Head of caudate nucleus (tissue), 42 donors: ENCODE measurements at regions of chr5 and their contacts with region 1.

Region 1: DNA sequence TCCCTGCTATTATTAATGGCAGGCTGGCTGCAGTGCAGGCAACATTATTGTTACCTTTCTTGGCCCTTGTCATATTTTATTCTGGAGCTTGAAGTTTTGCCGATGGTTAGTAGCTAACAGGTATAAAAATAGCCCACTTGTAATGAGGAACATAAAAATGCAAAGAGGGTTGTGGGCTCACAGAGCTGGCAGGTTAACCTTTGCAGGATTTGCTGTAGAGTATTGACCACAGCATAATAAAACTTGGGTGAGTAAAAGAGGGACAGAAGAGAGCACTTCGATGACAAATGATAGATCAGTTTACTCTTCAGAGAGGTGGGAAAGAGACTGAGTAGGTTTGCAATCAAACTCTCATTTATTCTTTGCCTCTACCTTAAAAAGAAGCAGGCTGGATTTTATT is 49.7 kb upstream of the SGCD start:
- DNase-seq: no peak

Region 2: GRCh38 chr5:155996123-155996522 is 281.2 kb before region 1 on chr5:
- intact Hi-C with region 1: loop called (anchors 10 kb)
- DNase-seq: no peak